OCI-LY7 (cell line): ENCODE measurements at regions of chr1 and their contacts with region 1.

Region 1: DNA sequence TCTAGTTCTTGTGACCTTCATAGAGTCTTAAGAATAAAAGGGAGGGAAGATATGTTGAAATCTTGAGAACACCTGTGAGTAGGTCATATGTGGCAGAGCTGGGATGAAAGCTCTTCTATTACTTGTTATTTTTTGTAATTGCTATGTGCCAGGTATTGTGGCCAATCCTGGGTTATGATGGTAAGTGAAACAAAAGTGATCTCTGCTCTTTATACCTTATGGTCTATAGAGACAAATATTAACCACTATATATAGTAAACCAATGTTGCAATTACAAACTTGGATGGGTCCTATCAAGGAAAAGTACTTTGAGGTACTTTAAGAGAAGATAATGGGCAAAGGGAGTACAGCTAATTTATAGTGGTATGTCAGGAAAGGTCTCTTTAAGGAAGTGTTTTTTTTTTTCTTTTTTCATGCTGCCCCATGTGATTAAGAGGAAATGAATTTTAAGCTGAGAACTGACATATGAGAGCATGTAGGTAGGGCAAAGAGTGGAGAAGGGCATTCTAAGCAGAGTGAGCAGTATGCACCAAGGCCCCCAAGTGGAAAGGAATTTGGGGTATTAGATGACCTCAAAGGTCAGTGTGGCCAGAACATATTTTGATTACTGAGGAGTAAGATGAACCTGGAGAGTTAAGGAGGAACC is 43.3 kb downstream of the POU2F1 start:
- DNase-seq: peak; percentile 27
- H3K4me3 ChIP-seq: no peak overlapping the region
- H3K27ac ChIP-seq: no peak overlapping the region
- H3K4me1 ChIP-seq: peaks cover 32% of the 10 kb centered on the region
- CTCF ChIP-seq: no peak

Region 2: GRCh38 chr1:167016100-167016750 is 247.7 kb before region 1 on chr1:
- CTCF ChIA-PET with region 1: no interaction called
- POLR2A ChIA-PET with region 1: no interaction called
- intact Hi-C with region 1: no loop called
- DNase-seq: no peak
- H3K4me3 ChIP-seq: no peak overlapping the region
- H3K27ac ChIP-seq: no peak overlapping the region
- H3K4me1 ChIP-seq: no peaks in the 10 kb centered on the region
- CTCF ChIP-seq: no peak

Region 3: GRCh38 chr1:167227934-167228378 is 36.0 kb before region 1 on chr1:
- CTCF ChIA-PET with region 1: no interaction called
- POLR2A ChIA-PET with region 1: no interaction called
- intact Hi-C with region 1: no loop called
- DNase-seq: no peak
- H3K4me3 ChIP-seq: no peak overlapping the region
- H3K27ac ChIP-seq: no peak overlapping the region
- H3K4me1 ChIP-seq: peaks cover 11% of the 10 kb centered on the region
- CTCF ChIP-seq: no peak

Region 4: DNA sequence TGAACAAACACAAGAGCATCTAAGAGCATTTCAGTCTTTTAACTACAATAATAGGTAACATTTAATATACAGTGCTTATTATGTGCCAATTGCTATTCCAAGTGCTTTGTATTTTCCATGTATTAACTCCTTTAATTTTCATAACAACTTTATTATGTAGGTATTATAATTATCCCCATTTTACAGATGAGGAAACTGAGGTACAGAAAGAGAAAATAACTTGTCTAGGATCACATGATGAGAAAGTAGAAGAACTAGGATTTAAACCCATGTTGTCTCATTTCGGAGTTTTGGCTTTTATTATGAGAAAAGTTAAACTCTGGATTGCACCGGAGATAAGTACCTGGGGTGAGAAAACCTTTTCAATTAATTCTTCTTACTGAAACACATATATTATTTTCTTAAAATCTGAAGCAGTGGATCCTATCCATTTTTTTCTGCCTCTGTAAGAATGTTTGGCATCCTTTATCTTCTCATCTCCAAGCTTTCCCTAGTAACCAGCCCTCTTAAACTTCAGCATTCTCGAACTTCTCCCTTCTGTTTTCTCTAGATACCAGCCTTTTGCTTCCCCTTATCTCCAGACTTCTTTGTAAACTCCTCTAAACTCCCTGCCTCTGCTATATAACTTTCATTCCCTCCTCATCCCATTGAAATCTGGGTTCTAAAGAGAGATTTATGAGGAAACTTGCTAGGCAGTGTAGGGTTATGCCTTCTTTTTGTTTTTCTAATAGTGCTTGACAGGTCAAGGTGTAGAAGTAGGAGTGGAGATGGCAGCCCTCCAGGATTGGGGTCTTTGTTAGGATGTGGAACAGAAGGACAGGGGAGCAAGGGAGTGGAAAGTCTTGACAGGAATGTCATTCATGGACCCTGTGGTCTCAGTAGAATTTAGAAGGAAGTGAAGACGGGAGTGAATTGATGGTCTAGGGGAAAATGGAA is 15.0 kb before region 1 on chr1:
- CTCF ChIA-PET with region 1: interaction called, 3 read pairs
- POLR2A ChIA-PET with region 1: interaction called, 11 read pairs
- intact Hi-C with region 1: no loop called
- DNase-seq: no peak
- H3K4me3 ChIP-seq: no peak overlapping the region
- H3K27ac ChIP-seq: no peak overlapping the region
- H3K4me1 ChIP-seq: peaks cover 16% of the 10 kb centered on the region
- CTCF ChIP-seq: no peak

Region 5: DNA sequence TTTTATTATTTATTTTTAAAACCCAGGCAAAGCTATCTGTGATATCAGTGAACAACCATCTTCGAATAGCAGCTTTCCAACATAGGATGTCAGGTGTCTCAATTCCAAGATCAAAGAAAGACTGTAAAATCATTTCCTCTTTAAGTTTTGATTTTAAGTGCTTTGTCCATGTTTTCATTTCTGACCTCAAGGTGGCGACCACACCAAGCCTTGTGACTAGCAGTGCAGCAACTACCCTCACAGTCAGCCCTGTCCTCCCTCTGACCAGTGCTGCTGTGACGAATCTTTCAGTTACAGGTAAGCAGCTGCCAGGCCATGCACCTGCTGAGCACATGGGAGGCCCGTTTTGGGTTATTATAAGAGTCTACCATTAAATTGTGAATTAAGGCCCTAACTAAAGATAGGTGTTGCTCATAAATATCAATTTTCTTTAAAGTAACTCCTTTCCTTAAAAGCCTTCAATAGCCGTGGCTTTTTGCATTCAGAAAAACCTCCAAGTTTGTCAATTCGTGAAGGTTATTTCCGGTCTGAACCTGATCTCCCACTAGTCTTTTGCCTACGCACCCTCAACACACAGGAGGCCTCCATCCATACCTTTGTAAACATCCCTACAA is 137.4 kb after region 1 on chr1:
- CTCF ChIA-PET with region 1: interaction called, 3 read pairs
- POLR2A ChIA-PET with region 1: interaction called, 12 read pairs
- intact Hi-C with region 1: no loop called
- DNase-seq: peak; percentile 70
- H3K4me3 ChIP-seq: no peak overlapping the region
- H3K27ac ChIP-seq: no peak overlapping the region
- H3K4me1 ChIP-seq: peaks cover 11% of the 10 kb centered on the region
- CTCF ChIP-seq: peak; percentile 83

Region 6: DNA sequence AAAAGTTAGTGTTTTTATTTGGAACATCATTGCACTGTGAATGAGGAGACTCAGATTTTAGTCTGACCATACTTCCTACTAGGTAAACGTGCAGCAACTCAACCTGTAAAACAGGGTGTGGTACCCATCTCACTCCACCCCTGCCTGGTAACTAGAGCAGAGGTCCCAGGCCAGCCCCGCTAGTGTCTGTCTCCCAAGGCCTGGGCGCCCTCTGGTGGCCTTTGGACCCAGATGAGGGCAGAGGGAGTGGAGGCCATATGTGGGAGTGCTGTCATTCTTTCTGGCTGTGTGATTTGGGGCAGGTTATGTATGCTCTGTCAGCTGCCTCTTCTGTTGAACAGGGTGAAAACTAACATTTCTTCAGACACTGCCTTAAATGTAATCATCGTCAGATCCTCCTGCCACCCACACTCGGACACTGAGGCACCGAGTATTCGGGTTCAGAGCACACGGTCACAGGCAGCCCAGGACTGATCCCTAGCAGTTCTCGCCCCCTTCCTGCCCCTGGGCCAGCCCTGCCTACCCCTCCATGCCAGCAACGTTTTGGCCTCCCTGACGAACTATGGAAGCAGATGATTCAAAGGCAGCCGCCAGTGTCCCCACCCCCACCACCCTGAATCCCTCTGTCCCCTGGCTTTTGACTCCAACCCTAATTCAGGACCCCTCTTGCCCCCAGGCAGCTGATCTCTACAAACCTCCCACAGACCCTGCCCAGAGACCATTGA is 178.3 kb after region 1 on chr1:
- CTCF ChIA-PET with region 1: interaction called, 4 read pairs
- POLR2A ChIA-PET with region 1: interaction called, 7 read pairs
- intact Hi-C with region 1: loop called (anchors 1 kb)
- DNase-seq: peak; percentile 92
- H3K4me3 ChIP-seq: no peak overlapping the region
- H3K27ac ChIP-seq: no peak overlapping the region
- H3K4me1 ChIP-seq: peaks cover 29% of the 10 kb centered on the region
- CTCF ChIP-seq: peak; percentile 96